ENCODE measurements at regions of chr7 and their contacts with region 1.

Region 1: DNA sequence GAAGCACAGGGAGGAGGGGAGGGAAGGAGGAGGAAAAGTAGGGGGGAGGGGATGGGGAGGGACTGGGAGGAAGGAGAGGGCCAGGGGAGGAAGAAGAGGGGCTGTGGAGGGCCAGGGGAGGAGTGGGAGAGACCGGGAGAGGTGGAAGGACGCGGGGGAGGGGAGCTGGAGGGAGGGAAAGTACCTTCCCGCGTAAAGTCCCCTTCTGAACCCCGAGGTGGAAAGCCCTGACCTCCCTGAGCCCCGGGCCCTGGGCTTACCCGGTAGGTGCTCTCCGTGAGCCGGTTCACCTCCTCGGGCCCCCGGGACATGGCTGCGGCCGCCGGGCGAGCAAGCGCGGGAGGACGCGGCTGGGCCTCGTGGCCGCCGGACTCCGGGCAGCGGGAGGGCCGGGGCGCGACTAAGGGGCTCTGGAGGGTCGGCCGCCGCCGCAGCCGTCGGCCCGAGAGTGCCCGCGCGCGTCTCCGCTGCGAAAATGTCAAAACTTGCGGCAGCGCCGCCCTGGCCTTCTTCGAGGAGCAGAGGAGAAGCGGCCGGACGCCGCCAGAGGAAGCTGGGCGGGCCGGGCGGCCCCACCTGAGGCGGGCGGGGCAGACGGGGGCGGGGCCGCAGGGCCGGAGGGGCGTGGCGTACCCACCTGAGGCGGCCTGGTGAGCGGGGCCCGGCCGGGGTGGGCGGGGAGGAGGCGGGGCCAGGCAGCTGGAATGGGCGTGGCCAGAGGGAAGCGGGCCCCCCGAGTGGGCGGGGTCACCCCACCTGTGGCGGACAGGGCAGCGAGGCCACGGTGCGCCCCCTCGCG is at the start of gene BAIAP2L1:
- DNase-seq: peak; percentile 96
- H3K4me3 ChIP-seq: peak within 1 kb of the TSS; percentile 75
- H3K27ac ChIP-seq: peak within 1 kb of the TSS; percentile 92
- H3K4me1 ChIP-seq: peaks cover 6% of the 10 kb centered on the region
- H3K27me3 ChIP-seq: no peaks in the 10 kb centered on the region
- CTCF ChIP-seq: no peak
- total RNA-seq, gene BAIAP2L1: 63.9 to 66.2 TPM

Region 2: DNA sequence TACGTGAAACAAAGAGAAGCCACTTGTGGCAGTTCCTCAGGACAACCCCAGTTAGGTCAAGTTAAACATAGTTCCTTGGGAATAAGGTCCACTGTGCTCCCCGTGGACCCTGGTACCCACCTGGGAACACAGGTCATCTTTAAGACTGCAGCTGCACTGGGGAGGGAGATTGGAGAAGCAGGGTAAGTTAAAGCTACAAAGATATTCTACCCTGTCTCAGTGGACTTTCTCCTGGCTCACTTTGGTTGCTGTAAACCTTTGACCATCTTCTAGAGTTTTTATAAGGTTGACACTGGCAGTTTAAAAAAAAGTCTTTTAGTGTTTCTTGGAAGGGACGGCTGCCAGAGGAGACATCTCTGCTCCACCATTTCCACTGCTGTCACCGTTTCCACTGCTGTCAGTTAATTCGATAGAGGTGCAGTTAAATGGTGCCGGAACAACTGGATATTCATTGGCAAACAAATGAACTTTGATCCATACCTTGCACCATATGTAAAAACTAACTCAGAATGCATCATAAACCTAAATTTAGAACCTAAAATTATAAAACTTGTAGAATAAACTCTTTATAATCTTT is 251.5 kb before region 1 on chr7:
- intact Hi-C with region 1: no loop called
- DNase-seq: peak; percentile 61
- H3K4me3 ChIP-seq: no peak overlapping the region
- H3K27ac ChIP-seq: peak overlapping the region; percentile 70
- H3K4me1 ChIP-seq: peaks cover 3% of the 10 kb centered on the region
- H3K27me3 ChIP-seq: no peaks in the 10 kb centered on the region
- CTCF ChIP-seq: no peak

Region 3: DNA sequence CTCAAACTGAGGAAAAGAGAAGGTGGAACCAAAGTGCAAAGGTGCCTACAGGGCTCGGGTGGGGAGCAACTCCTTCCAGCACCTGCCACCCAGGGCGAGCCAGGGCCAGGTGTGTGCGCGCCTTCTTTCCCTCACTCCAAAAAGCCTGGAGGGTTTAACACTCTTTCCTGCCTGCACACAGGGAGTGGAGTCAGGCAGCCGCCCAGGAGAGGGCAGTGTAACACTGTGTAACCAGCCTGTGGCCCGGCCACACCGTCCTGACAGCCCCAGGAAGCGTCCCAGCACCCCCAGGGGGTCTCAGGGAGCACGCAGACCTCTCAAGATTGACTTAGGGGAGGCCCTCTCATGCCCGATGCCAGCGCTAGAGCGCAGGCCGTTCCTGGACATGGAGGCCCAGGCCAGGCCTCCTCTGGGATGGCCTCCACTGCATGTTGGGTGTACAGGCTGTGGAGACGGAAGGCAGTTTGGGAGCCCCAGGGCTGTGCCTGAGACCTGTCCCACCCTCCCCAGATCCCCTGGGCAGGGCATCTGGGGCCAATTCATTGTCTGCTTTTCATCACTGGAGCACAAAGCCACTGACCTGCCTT is 105.9 kb before region 1 on chr7:
- intact Hi-C with region 1: loop called (anchors 2 kb)
- DNase-seq: peak; percentile 71
- H3K4me3 ChIP-seq: no peak overlapping the region
- H3K27ac ChIP-seq: no peak overlapping the region
- H3K4me1 ChIP-seq: no peaks in the 10 kb centered on the region
- H3K27me3 ChIP-seq: no peaks in the 10 kb centered on the region
- CTCF ChIP-seq: peak; percentile 55

Measured in colonic mucosa (tissue), 4 donors.